Naive thymus-derived CD4-positive, alpha-beta T cell (primary cell): ENCODE measurements at regions of chrX and their contacts with region 1.

Region 1: DNA sequence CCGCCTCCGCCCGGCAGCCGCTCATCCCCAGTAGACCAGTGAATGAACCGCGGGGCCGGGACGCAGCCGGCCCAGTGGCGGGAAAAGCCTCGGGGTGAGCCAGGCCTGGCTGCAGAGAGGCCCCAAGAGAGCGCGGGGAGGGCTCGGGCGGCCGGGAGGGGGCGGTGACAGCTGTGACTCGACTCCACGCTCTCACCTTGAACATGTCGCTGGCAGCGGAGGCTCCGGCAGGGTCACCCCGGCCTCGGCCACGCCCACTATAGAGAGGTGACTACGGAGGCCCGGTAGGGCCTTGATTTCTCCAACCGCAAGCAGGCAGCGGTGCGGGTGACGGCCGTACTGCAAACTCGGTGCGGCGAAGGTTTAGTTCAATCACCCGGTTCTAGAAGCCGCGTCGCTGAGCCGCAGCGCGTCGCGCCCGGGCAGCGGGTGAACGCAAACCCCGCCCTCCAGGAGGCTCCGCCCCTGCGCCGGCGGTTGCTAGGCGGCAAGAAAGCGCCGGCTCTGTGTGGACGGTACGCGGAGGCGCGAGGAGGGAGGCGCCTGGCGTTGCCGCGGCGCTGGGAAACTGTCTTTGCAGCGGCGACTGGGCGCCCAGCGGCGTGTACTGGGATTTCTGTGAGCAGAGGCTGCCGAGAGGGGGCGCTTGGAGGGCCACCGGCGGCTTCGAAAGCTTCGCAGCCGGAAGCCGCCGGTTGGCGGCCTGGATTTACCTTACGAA is at the starts of genes APOO and CXorf58:
- DNase-seq: peak; percentile 80 to 94 (median 91)
- ATAC-seq: peak; percentile 95
- H3K4me3 ChIP-seq: peak within 1 kb of the TSS; percentile 62
- H3K4me3 Mint-ChIP-seq: peak within 1 kb of the TSS; percentile 79 to 88 (median 83)
- H3K27ac ChIP-seq: peak within 1 kb of the TSS; percentile 88
- H3K27ac Mint-ChIP-seq: peak within 1 kb of the TSS; percentile 85 to 94 (median 90)
- H3K4me1 ChIP-seq: peaks cover 10 to 16% of the 10 kb centered on the region in 2 donors
- H3K4me1 Mint-ChIP-seq: peaks cover 0 to 17% (median 8%) of the 10 kb centered on the region in 7 donors
- H3K27me3 ChIP-seq: no peaks in the 10 kb centered on the region
- H3K27me3 Mint-ChIP-seq: no peaks in the 10 kb centered on the region
- total RNA-seq, gene APOO: 5.4 to 19.2 (median 7.5) TPM
- total RNA-seq, gene CXorf58: not detected

Region 2: GRCh38 chrX:23598561-23598960 is 309.1 kb before region 1 on chrX:
- CTCF ChIA-PET with region 1: no interaction called
- POLR2A ChIA-PET with region 1: no interaction called
- intact Hi-C with region 1: no loop called
- DNase-seq: no peak
- ATAC-seq: no peak
- H3K4me3 ChIP-seq: no peak overlapping the region
- H3K4me3 Mint-ChIP-seq: no peak overlapping the region
- H3K27ac ChIP-seq: no peak overlapping the region
- H3K27ac Mint-ChIP-seq: no peak overlapping the region
- H3K4me1 ChIP-seq: no peaks in the 10 kb centered on the region
- H3K4me1 Mint-ChIP-seq: no peaks in the 10 kb centered on the region
- H3K27me3 ChIP-seq: no peaks in the 10 kb centered on the region
- H3K27me3 Mint-ChIP-seq: no peaks in the 10 kb centered on the region

Region 3: GRCh38 chrX:23742697-23743622 is 164.7 kb before region 1 on chrX and contains the start of gene ACOT9:
- CTCF ChIA-PET with region 1: no interaction called
- POLR2A ChIA-PET with region 1: no interaction called
- intact Hi-C with region 1: loop called in 1 of 2 experiments (anchors 2 kb)
- DNase-seq: peak; percentile 26 to 84 (median 49)
- ATAC-seq: peak; percentile 97
- H3K4me3 ChIP-seq: peak within 1 kb of the TSS; percentile 75
- H3K4me3 Mint-ChIP-seq: peak within 1 kb of the TSS; percentile 77 to 91 (median 86)
- H3K27ac ChIP-seq: peak within 1 kb of the TSS; percentile 49
- H3K27ac Mint-ChIP-seq: peak within 1 kb of the TSS; percentile 69 to 90 (median 75)
- H3K4me1 ChIP-seq: peaks cover 0 to 14% of the 10 kb centered on the region in 2 donors
- H3K4me1 Mint-ChIP-seq: peaks cover 13 to 36% (median 18%) of the 10 kb centered on the region in 7 donors
- H3K27me3 ChIP-seq: no peaks in the 10 kb centered on the region
- H3K27me3 Mint-ChIP-seq: no peaks in the 10 kb centered on the region
- total RNA-seq, gene ACOT9: 8.2 to 40.1 (median 9.1) TPM

Region 4: DNA sequence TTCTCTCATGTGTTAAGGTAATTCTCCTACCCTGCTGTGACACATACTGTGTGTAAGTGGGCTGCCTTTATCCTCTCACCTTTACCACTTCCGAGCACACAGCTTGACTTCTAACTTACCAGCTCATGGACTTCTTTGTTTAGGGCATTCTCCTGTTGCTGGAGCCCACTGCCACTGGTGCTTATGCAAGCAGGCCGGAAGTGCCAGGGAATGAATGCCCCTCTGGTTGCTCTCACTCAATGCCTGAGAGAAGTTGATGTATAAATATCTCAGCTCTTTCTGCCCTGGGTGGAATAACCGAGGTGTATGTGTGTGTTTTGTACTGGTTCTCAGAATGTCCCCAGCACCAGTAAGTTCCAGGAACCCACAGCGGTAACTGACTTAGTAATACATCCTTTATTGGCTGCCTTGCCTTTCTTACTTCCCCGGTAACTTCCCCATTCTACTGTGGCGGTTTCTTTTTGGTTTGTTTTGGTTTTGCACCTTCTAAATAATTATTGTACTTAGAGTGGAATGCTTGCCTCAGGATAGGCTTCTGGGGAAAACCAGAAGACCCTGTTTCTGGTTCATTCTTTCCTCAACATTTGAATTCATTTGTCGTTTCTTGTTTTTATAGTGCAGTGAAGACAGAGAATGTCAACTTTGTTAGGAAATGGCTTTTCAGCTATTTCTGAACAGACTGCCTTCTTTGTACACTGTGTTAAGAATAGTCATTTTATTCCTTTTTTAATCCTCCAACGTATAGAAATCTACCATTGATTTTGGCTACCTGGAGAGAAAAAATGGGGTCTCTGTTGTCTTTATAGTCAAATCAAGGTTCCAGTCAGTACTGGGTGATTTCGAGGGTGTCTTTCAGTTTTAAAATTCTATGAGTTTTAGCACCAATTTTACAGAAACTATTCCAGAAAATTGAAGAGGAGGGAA is 45.6 kb after region 1 on chrX:
- CTCF ChIA-PET with region 1: interaction called, 5 read pairs
- POLR2A ChIA-PET with region 1: interaction called, 3 read pairs
- intact Hi-C with region 1: loop called (anchors 1 kb)
- DNase-seq: peak in 8 of 9 donors; percentile 31 to 63 (median 46)
- ATAC-seq: peak; percentile 93
- H3K4me3 ChIP-seq: peak overlapping the region; percentile 84
- H3K4me3 Mint-ChIP-seq: peak overlapping the region; percentile 72 to 97 (median 88)
- H3K27ac ChIP-seq: peak overlapping the region; percentile 80
- H3K27ac Mint-ChIP-seq: peak overlapping the region; percentile 78 to 99 (median 91)
- H3K4me1 ChIP-seq: peaks cover 0 to 12% of the 10 kb centered on the region in 2 donors
- H3K4me1 Mint-ChIP-seq: peaks cover 7 to 55% (median 20%) of the 10 kb centered on the region in 7 donors
- H3K27me3 ChIP-seq: no peaks in the 10 kb centered on the region
- H3K27me3 Mint-ChIP-seq: no peaks in the 10 kb centered on the region

Region 5: GRCh38 chrX:24241822-24242648 is 334.4 kb after region 1 on chrX:
- CTCF ChIA-PET with region 1: no interaction called
- POLR2A ChIA-PET with region 1: no interaction called
- intact Hi-C with region 1: loop called in 1 of 2 experiments (anchors 1 kb)
- DNase-seq: peak in 5 of 9 donors; percentile 4 to 41 (median 28)
- ATAC-seq: peak; percentile 38
- H3K4me3 ChIP-seq: no peak overlapping the region
- H3K4me3 Mint-ChIP-seq: no peak overlapping the region
- H3K27ac ChIP-seq: no peak overlapping the region
- H3K27ac Mint-ChIP-seq: peak overlapping the region in 1 of 9 donors; percentile 8
- H3K4me1 ChIP-seq: no peaks in the 10 kb centered on the region
- H3K4me1 Mint-ChIP-seq: peaks cover 0 to 4% (median 0%) of the 10 kb centered on the region in 7 donors
- H3K27me3 ChIP-seq: no peaks in the 10 kb centered on the region
- H3K27me3 Mint-ChIP-seq: peaks cover 0 to 2% (median 0%) of the 10 kb centered on the region in 5 donors

Region 6: DNA sequence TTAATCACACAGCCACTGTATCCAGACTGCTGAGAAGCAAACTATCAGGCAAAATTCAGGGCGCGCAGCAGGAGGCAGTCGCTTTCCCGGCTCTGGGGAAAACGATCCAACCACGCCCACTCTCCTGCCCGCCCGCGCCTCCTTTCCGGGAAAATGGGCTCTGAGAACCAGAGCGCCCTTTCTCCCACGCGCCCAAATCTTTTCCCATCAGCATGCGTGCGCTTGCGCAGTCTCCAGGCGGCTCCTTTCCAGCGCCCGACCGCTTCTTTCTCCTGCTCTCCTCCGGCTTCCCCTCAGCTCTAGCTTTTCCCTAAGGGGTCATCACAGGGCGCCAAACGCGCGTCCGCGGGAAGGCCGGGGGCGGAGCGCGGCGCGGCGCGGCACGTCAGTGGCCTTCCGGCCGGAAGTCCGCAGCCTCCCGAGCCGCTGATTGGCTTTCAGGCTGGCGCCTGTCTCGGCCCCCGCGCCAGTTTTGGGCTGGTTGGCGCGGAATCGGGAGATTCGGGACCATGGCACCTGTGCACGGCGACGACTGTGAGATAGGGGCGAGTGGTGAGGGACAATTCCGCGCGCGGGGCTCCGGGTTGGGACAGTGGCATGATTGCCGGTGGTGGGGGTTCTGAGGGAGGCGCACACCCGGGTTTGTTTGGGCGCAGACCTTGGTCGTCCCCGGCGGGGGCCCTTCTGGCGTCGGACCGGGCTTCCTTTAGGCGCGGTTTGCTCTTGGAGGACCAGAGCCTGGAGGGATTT is 786.0 kb after region 1 on chrX and contains the start of gene POLA1:
- CTCF ChIA-PET with region 1: no interaction called
- POLR2A ChIA-PET with region 1: no interaction called
- intact Hi-C with region 1: loop called in 1 of 2 experiments (anchors 2 kb)
- DNase-seq: peak; percentile 33 to 81 (median 41)
- ATAC-seq: peak; percentile 97
- H3K4me3 ChIP-seq: peak within 1 kb of the TSS; percentile 78
- H3K4me3 Mint-ChIP-seq: peak within 1 kb of the TSS; percentile 85 to 94 (median 89)
- H3K27ac ChIP-seq: peak within 1 kb of the TSS; percentile 52
- H3K27ac Mint-ChIP-seq: peak within 1 kb of the TSS; percentile 28 to 95 (median 77)
- H3K4me1 ChIP-seq: no peaks in the 10 kb centered on the region
- H3K4me1 Mint-ChIP-seq: peaks cover 0 to 24% (median 13%) of the 10 kb centered on the region in 7 donors
- H3K27me3 ChIP-seq: no peaks in the 10 kb centered on the region
- H3K27me3 Mint-ChIP-seq: no peaks in the 10 kb centered on the region
- total RNA-seq, gene POLA1: 6.4 to 26.6 (median 7.5) TPM

Region 7: DNA sequence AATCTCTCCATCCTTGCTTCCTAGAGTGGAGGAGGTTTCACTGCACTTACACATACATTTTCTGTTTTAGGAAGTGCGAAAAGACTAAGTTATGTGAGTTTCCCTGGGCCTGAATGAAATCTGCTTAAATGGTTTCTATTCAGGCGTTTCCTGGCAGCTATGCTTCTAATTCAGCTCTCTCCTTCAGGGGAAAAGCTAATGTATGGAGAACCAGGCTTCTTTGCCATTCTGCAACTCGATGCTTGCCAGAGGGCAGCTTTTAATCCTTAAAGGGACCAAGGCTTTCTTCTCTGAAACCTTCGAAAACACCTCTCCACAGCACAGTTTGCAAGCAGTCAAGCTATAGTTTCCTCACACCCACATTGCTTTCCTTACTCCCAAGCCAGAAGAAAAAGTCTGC is 1197.6 kb after region 1 on chrX:
- CTCF ChIA-PET with region 1: no interaction called
- POLR2A ChIA-PET with region 1: no interaction called
- intact Hi-C with region 1: no loop called
- DNase-seq: no peak
- ATAC-seq: no peak
- H3K4me3 ChIP-seq: no peak overlapping the region
- H3K4me3 Mint-ChIP-seq: no peak overlapping the region
- H3K27ac ChIP-seq: no peak overlapping the region
- H3K27ac Mint-ChIP-seq: no peak overlapping the region
- H3K4me1 ChIP-seq: no peaks in the 10 kb centered on the region
- H3K4me1 Mint-ChIP-seq: no peaks in the 10 kb centered on the region
- H3K27me3 ChIP-seq: no peaks in the 10 kb centered on the region
- H3K27me3 Mint-ChIP-seq: peaks cover 0 to 8% (median 0%) of the 10 kb centered on the region in 5 donors